B cell (primary cell): ENCODE measurements at regions of chr15 and their contacts with region 1.

Region 1: GRCh38 chr15:100940767-100941379 is 21.7 kb downstream of the LRRK1 start:
- DNase-seq: peak; percentile 48
- ATAC-seq: peak; percentile 89
- H3K4me3 ChIP-seq: no peak overlapping the region
- H3K4me3 Mint-ChIP-seq: no peak overlapping the region
- H3K27ac ChIP-seq: peak overlapping the region; percentile 8 to 13
- H3K27ac Mint-ChIP-seq: no peak overlapping the region
- H3K4me1 ChIP-seq: peaks cover 22 to 39% of the 10 kb centered on the region in 2 donors
- H3K4me1 Mint-ChIP-seq: peaks cover 26% of the 10 kb centered on the region
- H3K27me3 ChIP-seq: no peaks in the 10 kb centered on the region
- H3K27me3 Mint-ChIP-seq: no peaks in the 10 kb centered on the region
- CTCF ChIP-seq: no peak

Region 2: DNA sequence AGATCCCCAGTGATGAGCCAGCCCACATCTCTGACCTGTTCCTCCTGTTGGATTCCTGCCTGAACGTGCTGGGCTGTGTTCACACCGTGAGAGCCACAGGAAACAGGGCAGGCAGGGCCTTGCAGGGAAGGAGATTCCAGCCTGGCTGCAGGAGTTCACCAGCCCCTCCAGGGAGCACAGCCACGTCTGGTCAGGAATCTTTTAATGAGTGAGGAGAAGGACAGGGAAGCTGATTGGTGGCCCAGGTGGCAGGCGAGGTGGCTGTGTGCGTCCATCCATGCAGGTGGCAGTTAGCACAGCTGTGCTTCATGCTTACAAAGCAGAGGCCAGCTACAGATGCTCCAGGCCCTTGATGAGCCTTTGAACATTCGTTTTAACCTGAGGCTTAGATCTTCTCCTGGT is 11.2 kb before region 1 on chr15:
- CTCF ChIA-PET with region 1: interaction called, 5 read pairs
- POLR2A ChIA-PET with region 1: interaction called, 3 read pairs
- intact Hi-C with region 1: loop called (anchors 2 kb)
- DNase-seq: no peak
- ATAC-seq: no peak
- H3K4me3 ChIP-seq: no peak overlapping the region
- H3K4me3 Mint-ChIP-seq: peak overlapping the region; percentile 55
- H3K27ac ChIP-seq: no peak overlapping the region
- H3K27ac Mint-ChIP-seq: peak overlapping the region; percentile 37
- H3K4me1 ChIP-seq: peaks cover 56 to 73% of the 10 kb centered on the region in 2 donors
- H3K4me1 Mint-ChIP-seq: peaks cover 74% of the 10 kb centered on the region
- H3K27me3 ChIP-seq: no peaks in the 10 kb centered on the region
- H3K27me3 Mint-ChIP-seq: no peaks in the 10 kb centered on the region
- CTCF ChIP-seq: no peak

Region 3: DNA sequence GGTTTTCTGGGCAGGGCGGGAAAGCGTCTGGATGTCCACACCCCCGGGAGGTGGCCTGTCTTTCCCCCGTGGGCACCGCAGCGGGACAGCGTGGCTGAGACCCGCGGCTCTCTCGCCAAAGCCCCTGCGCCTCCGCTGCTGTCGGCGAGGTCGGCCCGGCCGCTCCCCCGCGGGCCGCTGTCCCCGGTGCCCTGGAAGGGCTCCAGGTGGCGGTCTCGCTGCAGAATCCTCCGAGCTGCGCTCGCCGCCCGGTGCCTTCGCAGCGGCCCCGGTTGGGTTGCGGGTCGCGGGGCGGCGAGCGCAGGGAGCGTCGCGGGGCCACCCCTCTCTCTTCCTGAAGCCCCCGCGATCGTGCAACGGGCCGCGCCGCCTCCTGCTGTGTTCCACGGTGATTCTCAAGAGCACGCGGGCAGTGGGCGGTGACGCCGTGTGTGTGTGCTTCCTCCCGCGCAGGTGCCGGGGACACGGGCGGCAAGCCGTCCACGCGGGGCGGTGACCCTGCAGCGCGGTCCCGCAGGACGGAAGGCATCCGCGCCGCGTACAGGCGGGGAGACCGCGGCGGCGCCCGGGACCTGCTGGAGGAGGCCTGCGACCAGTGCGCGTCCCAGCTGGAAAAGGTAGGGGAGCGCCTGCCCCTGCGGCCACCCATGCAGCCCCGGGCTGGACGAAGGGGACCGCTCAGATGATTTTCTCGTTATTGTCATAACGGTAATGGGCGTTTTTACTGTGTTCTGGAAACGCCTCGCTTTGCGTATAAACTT is 32.7 kb after region 1 on chr15:
- CTCF ChIA-PET with region 1: no interaction called
- POLR2A ChIA-PET with region 1: no interaction called
- intact Hi-C with region 1: loop called (anchors 5 kb)
- DNase-seq: peak; percentile 35
- ATAC-seq: peak; percentile 39
- H3K4me3 ChIP-seq: peak overlapping the region in 3 of 5 experiments; percentile 9 to 21 (median 15)
- H3K4me3 Mint-ChIP-seq: peak overlapping the region; percentile 59
- H3K27ac ChIP-seq: no peak overlapping the region
- H3K27ac Mint-ChIP-seq: no peak overlapping the region
- H3K4me1 ChIP-seq: peaks cover 10 to 12% of the 10 kb centered on the region in 2 donors
- H3K4me1 Mint-ChIP-seq: peaks cover 9% of the 10 kb centered on the region
- H3K27me3 ChIP-seq: peaks cover 0 to 10% (median 4%) of the 10 kb centered on the region in 4 experiments
- H3K27me3 Mint-ChIP-seq: peaks cover 6% of the 10 kb centered on the region
- CTCF ChIP-seq: no peak